Common myeloid progenitor, CD34-positive (primary cell): ENCODE measurements at regions of chr12 and their contacts with region 1.

Region 1: DNA sequence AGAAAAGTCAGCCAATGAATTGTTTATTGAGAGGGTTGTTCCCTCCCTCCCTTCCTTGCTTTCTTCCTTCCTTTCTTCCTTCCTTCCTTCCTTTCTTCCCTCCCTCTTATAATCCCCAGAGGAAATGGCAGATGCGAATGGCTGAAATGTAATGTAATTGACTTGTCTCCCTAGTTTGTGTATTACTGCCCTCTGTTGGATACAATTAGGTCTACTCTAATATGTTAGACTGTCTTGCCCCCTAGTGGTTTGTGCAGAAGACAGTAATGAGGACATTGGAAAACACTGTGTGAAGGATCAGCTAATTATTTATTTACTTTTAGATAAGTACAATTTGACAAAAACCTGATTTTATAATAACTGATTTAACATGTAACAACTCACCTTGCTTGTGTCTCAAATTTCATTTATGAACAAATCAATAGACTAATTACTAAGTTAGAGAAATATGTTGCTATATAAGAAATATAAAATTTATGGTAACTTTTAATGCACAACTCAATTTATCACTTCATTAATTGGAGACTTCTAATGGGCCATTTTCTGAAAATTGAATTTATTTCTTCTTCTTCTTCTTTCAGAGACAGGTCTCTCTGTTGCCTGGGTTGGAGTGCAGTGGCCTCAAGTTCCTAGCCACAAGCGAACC is 229.8 kb upstream of the LRIG3 start:
- DNase-seq: peak; percentile 79 to 87 (median 84)
- H3K4me3 ChIP-seq: no peak overlapping the region
- H3K27ac ChIP-seq: no peak overlapping the region
- H3K4me1 ChIP-seq: no peaks in the 10 kb centered on the region
- H3K27me3 ChIP-seq: no peaks in the 10 kb centered on the region

Region 2: GRCh38 chr12:59113831-59114615 is 36.1 kb before region 1 on chr12:
- CTCF ChIA-PET with region 1: interaction called, 30 read pairs
- POLR2A ChIA-PET with region 1: no interaction called
- DNase-seq: peak; percentile 71 to 88 (median 86)
- H3K4me3 ChIP-seq: peak overlapping the region in 2 of 7 experiments; percentile 14 to 20
- H3K27ac ChIP-seq: no peak overlapping the region
- H3K4me1 ChIP-seq: peaks cover 0 to 3% (median 1%) of the 10 kb centered on the region in 4 experiments
- H3K27me3 ChIP-seq: no peaks in the 10 kb centered on the region